ENCODE measurements at regions of chr16 and their contacts with region 1.

Region 1: DNA sequence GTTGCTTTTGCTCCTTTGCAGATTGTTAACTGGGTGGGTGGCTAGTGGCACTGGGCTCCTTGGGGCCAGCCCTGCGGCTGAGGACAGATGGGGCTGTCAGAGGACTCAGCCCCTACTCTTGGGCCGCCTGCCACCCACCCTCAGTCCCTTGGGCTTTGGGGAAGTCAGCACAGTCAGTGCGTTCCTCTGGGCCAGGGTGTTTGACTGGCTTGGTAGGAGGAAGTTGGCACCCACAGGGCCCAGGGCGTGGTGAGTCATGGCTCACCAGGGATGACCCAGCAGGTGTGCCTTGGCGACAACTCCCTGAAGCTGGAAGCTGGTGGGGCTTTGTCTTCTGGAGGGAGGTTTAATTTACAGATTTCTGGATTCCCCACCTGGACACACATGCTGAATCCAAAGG is 32.4 kb downstream of the HAPSTR1 start:
- DNase-seq: peak; percentile 90 to 94
- H3K4me3 ChIP-seq: no peak overlapping the region; the same call in 1 of the 2 replicates
- H3K27ac ChIP-seq: peak overlapping the region; percentile 87
- H3K4me1 ChIP-seq: peaks cover 66% of the 10 kb centered on the region
- H3K27me3 ChIP-seq: no peaks in the 10 kb centered on the region
- CTCF ChIP-seq: no peak

Region 2: DNA sequence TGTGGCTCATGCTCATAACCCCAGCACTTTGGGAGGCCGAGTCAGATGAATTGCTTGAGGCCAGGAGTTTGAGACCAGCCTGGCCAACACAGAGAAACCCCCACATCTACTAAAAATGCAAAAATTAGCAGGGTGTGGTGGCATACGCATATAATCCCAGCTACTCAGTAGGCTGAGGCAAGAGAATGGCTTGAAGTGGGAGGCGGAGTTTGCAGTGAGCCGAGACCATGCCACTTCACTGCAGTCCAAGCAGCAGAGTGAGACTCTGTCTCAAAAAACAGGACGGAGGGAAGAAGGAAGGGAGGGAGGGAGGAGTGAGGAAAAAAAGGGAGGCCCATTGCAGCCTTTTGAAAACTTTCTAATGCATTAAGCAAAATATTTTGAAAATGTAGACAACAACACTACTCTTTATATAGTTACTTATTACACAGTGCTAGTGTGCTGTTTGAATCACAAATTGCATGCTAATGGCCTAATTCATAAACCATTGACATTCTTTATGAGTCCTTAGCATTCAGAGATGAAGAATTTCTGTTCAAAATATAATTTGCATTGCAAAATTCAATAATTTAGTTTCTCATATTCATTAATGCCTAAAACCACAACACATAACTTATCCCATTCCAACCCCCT is 593.0 kb before region 1 on chr16:
- CTCF ChIA-PET with region 1: no interaction called
- POLR2A ChIA-PET with region 1: no interaction called
- intact Hi-C with region 1: no loop called
- DNase-seq: no peak
- H3K4me3 ChIP-seq: no peak overlapping the region
- H3K27ac ChIP-seq: no peak overlapping the region
- H3K4me1 ChIP-seq: no peaks in the 10 kb centered on the region
- H3K27me3 ChIP-seq: peaks cover 85% of the 10 kb centered on the region
- CTCF ChIP-seq: no peak

Region 3: GRCh38 chr16:8694795-8695728 is 428.8 kb before region 1 on chr16:
- CTCF ChIA-PET with region 1: no interaction called
- POLR2A ChIA-PET with region 1: no interaction called
- intact Hi-C with region 1: no loop called
- DNase-seq: no peak
- H3K4me3 ChIP-seq: no peak overlapping the region
- H3K27ac ChIP-seq: no peak overlapping the region
- H3K4me1 ChIP-seq: no peaks in the 10 kb centered on the region
- H3K27me3 ChIP-seq: no peaks in the 10 kb centered on the region
- CTCF ChIP-seq: no peak

Region 4: GRCh38 chr16:9077091-9077809 is 46.6 kb before region 1 on chr16:
- CTCF ChIA-PET with region 1: no interaction called
- POLR2A ChIA-PET with region 1: no interaction called
- intact Hi-C with region 1: loop called (anchors 5 kb)
- DNase-seq: peak; percentile 63 to 78
- H3K4me3 ChIP-seq: no peak overlapping the region
- H3K27ac ChIP-seq: peak overlapping the region; percentile 83
- H3K4me1 ChIP-seq: peaks cover 50% of the 10 kb centered on the region
- H3K27me3 ChIP-seq: no peaks in the 10 kb centered on the region
- CTCF ChIP-seq: no peak

Region 5: GRCh38 chr16:9869776-9870175 is 745.9 kb after region 1 on chr16:
- CTCF ChIA-PET with region 1: no interaction called
- POLR2A ChIA-PET with region 1: no interaction called
- intact Hi-C with region 1: no loop called
- DNase-seq: no peak
- H3K4me3 ChIP-seq: no peak overlapping the region
- H3K27ac ChIP-seq: no peak overlapping the region
- H3K4me1 ChIP-seq: no peaks in the 10 kb centered on the region
- H3K27me3 ChIP-seq: no peaks in the 10 kb centered on the region
- CTCF ChIP-seq: no peak